Activated CD4-positive, alpha-beta T cell treated with anti-CD3 and anti-CD28 coated beads for 36 hours (primary cell): ENCODE measurements at regions of chr7 and their contacts with region 1.

Region 1: GRCh38 chr7:87876040-87876868 is at the starts of genes DBF4 and SLC25A40:
- DNase-seq: peak; percentile 97
- ATAC-seq: peak; percentile 91
- H3K4me3 Mint-ChIP-seq: peak within 1 kb of the TSS; percentile 82
- H3K27ac Mint-ChIP-seq: peak within 1 kb of the TSS; percentile 93
- H3K4me1 Mint-ChIP-seq: peaks cover 48% of the 10 kb centered on the region
- H3K27me3 Mint-ChIP-seq: no peaks in the 10 kb centered on the region
- total RNA-seq, gene DBF4: 68.6 to 86.4 TPM
- total RNA-seq, gene SLC25A40: 38.0 to 41.9 TPM

Region 2: GRCh38 chr7:87312215-87312865 is 563.9 kb before region 1 on chr7:
- CTCF ChIA-PET with region 1: no interaction called
- POLR2A ChIA-PET with region 1: no interaction called
- intact Hi-C with region 1: loop called in 1 of 2 experiments (anchors 10 kb)
- DNase-seq: peak; percentile 76
- ATAC-seq: peak; percentile 86
- H3K4me3 Mint-ChIP-seq: no peak overlapping the region
- H3K27ac Mint-ChIP-seq: no peak overlapping the region
- H3K4me1 Mint-ChIP-seq: peaks cover 11% of the 10 kb centered on the region
- H3K27me3 Mint-ChIP-seq: no peaks in the 10 kb centered on the region

Region 3: GRCh38 chr7:87574630-87575029 is 301.6 kb before region 1 on chr7:
- CTCF ChIA-PET with region 1: no interaction called
- POLR2A ChIA-PET with region 1: no interaction called
- intact Hi-C with region 1: loop called in 1 of 2 experiments (anchors 5 kb)
- DNase-seq: peak; percentile 13
- ATAC-seq: peak; percentile 92
- H3K4me3 Mint-ChIP-seq: no peak overlapping the region
- H3K27ac Mint-ChIP-seq: peak overlapping the region; percentile 44
- H3K4me1 Mint-ChIP-seq: peaks cover 27% of the 10 kb centered on the region
- H3K27me3 Mint-ChIP-seq: no peaks in the 10 kb centered on the region

Region 4: GRCh38 chr7:87658553-87658952 is 217.7 kb before region 1 on chr7:
- CTCF ChIA-PET with region 1: no interaction called
- POLR2A ChIA-PET with region 1: no interaction called
- intact Hi-C with region 1: no loop called
- DNase-seq: no peak
- ATAC-seq: no peak
- H3K4me3 Mint-ChIP-seq: no peak overlapping the region
- H3K27ac Mint-ChIP-seq: no peak overlapping the region
- H3K4me1 Mint-ChIP-seq: no peaks in the 10 kb centered on the region
- H3K27me3 Mint-ChIP-seq: peaks cover 6% of the 10 kb centered on the region

Region 5: DNA sequence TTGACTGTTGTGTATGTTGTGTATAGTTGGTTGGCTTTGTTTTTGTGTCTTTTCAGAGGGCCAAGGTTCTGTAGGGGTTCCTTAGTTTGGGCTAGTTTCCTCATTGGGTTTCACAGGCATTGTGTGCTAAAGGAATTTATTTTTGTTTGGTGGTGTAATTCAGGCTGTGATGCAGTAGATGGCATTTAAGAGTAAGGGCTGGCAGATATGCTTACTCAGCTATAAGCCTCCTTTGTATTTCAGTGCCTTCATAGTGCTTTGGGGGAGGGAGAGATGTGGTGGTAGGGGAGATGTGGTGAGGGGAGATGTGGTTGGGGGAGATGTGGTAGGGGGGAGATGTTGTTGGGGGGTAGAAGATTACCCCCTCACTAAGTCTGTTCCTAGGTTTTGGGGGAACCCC is 91.8 kb before region 1 on chr7:
- CTCF ChIA-PET with region 1: no interaction called
- POLR2A ChIA-PET with region 1: no interaction called
- intact Hi-C with region 1: no loop called
- DNase-seq: no peak
- ATAC-seq: no peak
- H3K4me3 Mint-ChIP-seq: no peak overlapping the region
- H3K27ac Mint-ChIP-seq: no peak overlapping the region
- H3K4me1 Mint-ChIP-seq: no peaks in the 10 kb centered on the region
- H3K27me3 Mint-ChIP-seq: peaks cover 3% of the 10 kb centered on the region

Region 6: DNA sequence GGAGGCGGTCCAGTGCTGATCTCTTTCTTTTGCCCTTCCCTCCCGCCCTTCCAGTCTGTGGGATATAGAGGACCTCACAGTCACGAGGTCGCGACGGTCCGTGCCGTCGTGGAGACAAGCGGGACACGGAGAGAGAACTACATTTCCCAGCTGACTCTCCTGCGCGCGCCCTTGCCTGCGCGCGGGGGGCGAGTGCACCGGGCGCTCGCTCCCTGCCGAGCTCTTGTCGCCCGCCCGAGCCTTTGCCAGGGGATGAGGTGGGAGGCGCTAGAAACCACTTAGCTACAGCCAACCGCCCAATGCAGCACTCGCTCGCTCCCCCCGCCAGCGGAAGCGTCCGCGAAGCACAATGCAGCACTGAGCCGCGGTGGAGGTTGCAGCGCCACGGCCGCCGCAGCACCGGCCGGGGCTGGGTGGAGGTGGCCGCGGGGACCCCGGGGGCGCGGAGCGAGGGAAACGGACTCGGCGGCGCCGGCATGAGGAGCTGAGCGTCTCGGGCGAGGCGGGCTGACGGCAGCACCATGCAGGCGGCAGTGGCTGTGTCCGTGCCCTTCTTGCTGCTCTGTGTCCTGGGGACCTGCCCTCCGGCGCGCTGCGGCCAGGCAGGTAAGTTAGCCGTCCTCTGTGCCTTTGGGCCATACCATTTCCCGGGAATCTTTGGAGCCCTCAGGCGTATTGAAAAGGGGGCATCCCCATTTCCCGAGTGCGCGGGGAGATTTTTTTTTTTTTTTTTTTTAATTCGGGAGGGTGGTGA is 57.9 kb after region 1 on chr7 and contains the start of gene ADAM22:
- CTCF ChIA-PET with region 1: no interaction called
- POLR2A ChIA-PET with region 1: interaction called, 3 read pairs
- intact Hi-C with region 1: loop called (anchors 1 to 2 kb)
- DNase-seq: peak; percentile 89
- ATAC-seq: peak; percentile 98
- H3K4me3 Mint-ChIP-seq: peak within 1 kb of the TSS; percentile 81
- H3K27ac Mint-ChIP-seq: peak within 1 kb of the TSS; percentile 81
- H3K4me1 Mint-ChIP-seq: peaks cover 9% of the 10 kb centered on the region
- H3K27me3 Mint-ChIP-seq: peaks cover 5% of the 10 kb centered on the region
- total RNA-seq, gene ADAM22: 1.1 to 1.8 TPM

Region 7: GRCh38 chr7:87944531-87944930 is 68.3 kb after region 1 on chr7:
- CTCF ChIA-PET with region 1: no interaction called
- POLR2A ChIA-PET with region 1: no interaction called
- intact Hi-C with region 1: no loop called
- DNase-seq: no peak
- ATAC-seq: no peak
- H3K4me3 Mint-ChIP-seq: no peak overlapping the region
- H3K27ac Mint-ChIP-seq: no peak overlapping the region
- H3K4me1 Mint-ChIP-seq: no peaks in the 10 kb centered on the region
- H3K27me3 Mint-ChIP-seq: no peaks in the 10 kb centered on the region